B cell (primary cell): ENCODE measurements at regions of chr3 and their contacts with region 1.

Region 1: GRCh38 chr3:56997675-56998074 is 62.8 kb upstream of the SPATA12 start:
- DNase-seq: no peak
- ATAC-seq: no peak
- H3K4me3 ChIP-seq: no peak overlapping the region
- H3K4me3 Mint-ChIP-seq: no peak overlapping the region
- H3K27ac ChIP-seq: no peak overlapping the region
- H3K27ac Mint-ChIP-seq: no peak overlapping the region
- H3K4me1 ChIP-seq: no peaks in the 10 kb centered on the region
- H3K4me1 Mint-ChIP-seq: peaks cover 3% of the 10 kb centered on the region
- H3K27me3 ChIP-seq: peaks cover 0 to 5% (median 0%) of the 10 kb centered on the region in 4 experiments
- H3K27me3 Mint-ChIP-seq: peaks cover 7% of the 10 kb centered on the region
- CTCF ChIP-seq: no peak

Region 2: DNA sequence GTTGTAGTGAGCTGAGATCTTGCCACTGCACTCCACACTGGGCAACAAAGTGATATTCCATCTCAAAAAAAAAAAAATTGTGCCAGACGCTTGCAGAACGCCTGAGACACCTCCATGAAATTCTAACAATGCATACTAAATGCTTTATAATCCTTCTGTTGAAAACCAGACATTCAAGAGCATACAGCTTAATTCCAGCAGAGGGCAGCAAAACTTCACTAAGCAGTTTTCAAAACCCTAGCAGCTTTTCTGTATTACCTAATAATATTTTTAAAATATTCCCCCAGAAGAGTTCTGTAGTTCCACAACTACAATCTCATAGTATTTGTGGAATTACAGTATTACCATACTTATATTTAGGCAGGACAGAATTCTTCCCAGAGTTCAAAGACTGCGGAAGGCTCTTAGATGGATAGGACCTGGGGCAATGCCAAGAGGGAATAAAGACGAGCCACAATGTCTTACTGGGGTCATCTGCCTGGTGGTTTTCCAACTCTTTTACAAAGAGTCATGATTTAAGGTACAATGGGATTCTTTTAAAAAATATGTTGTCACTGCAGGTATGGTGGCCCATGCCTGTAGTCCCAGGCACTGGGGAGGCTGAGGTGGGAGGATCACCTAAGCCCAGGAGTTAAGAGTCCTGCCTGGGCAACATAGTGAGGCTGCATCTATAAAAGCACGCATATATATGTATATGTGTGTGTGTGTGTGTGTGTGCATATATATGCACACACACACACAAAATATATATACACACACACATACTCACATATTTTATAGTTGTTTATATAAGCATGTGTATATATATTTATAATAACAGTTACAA is 295.0 kb before region 1 on chr3:
- CTCF ChIA-PET with region 1: interaction called, 310 read pairs
- POLR2A ChIA-PET with region 1: interaction called, 3 read pairs
- intact Hi-C with region 1: no loop called
- DNase-seq: peak; percentile 81
- ATAC-seq: peak; percentile 64
- H3K4me3 ChIP-seq: no peak overlapping the region
- H3K4me3 Mint-ChIP-seq: no peak overlapping the region
- H3K27ac ChIP-seq: no peak overlapping the region
- H3K27ac Mint-ChIP-seq: no peak overlapping the region
- H3K4me1 ChIP-seq: peaks cover 0 to 4% of the 10 kb centered on the region in 2 donors
- H3K4me1 Mint-ChIP-seq: peaks cover 3% of the 10 kb centered on the region
- H3K27me3 ChIP-seq: no peaks in the 10 kb centered on the region
- H3K27me3 Mint-ChIP-seq: no peaks in the 10 kb centered on the region
- CTCF ChIP-seq: peak; percentile 93

Region 3: GRCh38 chr3:57017459-57017845 is 19.8 kb after region 1 on chr3:
- CTCF ChIA-PET with region 1: interaction called, 18 read pairs
- POLR2A ChIA-PET with region 1: no interaction called
- intact Hi-C with region 1: no loop called
- DNase-seq: no peak
- ATAC-seq: no peak
- H3K4me3 ChIP-seq: no peak overlapping the region
- H3K4me3 Mint-ChIP-seq: no peak overlapping the region
- H3K27ac ChIP-seq: no peak overlapping the region
- H3K27ac Mint-ChIP-seq: no peak overlapping the region
- H3K4me1 ChIP-seq: peaks cover 10 to 27% of the 10 kb centered on the region in 2 donors
- H3K4me1 Mint-ChIP-seq: peaks cover 22% of the 10 kb centered on the region
- H3K27me3 ChIP-seq: no peaks in the 10 kb centered on the region
- H3K27me3 Mint-ChIP-seq: peaks cover 6% of the 10 kb centered on the region
- CTCF ChIP-seq: no peak

Region 4: DNA sequence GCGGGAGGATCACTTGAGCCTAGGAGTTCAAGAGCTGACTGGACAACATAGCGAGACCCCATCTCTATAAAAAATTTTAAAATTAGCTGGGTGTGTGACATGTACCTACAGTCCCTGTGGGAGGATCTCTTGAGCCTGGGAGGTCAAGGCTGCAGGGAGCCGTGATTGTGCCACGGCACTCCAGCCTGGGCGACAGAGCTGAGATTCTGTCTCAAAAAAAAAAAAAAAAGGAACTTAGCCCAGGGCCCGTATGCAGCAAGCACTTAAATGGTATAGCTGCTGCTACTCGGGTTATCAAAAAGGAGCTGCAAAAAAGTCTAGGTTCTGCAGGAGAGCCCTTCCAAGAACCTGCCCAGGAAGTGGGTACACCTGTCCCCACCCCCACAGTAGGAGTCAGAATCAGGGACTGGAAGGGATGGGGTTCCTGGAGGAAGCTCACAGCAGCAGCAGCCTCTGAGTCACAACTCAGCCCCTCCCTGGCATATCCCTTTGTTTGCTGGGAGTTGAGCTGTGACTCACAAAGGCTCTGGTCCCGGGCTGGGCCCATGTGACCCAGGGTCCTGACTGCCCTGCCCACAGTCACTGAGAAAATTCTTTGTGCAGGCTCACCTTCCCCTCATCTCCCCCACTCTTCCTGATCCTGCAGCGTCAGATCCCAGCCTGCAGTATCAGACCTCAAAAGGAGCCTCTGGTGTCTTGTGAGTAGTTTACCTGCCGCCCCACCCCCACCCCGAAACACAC is 62.6 kb after region 1 on chr3 and contains the start of gene SPATA12:
- CTCF ChIA-PET with region 1: no interaction called
- POLR2A ChIA-PET with region 1: no interaction called
- intact Hi-C with region 1: no loop called
- DNase-seq: no peak
- ATAC-seq: peak; percentile 31
- H3K4me3 ChIP-seq: no peak within 1 kb of the TSS
- H3K4me3 Mint-ChIP-seq: no peak within 1 kb of the TSS
- H3K27ac ChIP-seq: no peak within 1 kb of the TSS
- H3K27ac Mint-ChIP-seq: no peak within 1 kb of the TSS
- H3K4me1 ChIP-seq: peaks cover 3 to 5% of the 10 kb centered on the region in 2 donors
- H3K4me1 Mint-ChIP-seq: peaks cover 2% of the 10 kb centered on the region
- H3K27me3 ChIP-seq: peaks cover 0 to 38% (median 22%) of the 10 kb centered on the region in 4 experiments
- H3K27me3 Mint-ChIP-seq: peaks cover 50% of the 10 kb centered on the region
- CTCF ChIP-seq: no peak
- total RNA-seq, gene SPATA12: not detected in 2 replicates

Region 5: GRCh38 chr3:57078344-57078634 is 80.6 kb after region 1 on chr3:
- CTCF ChIA-PET with region 1: interaction called, 13 read pairs
- POLR2A ChIA-PET with region 1: no interaction called
- intact Hi-C with region 1: loop called (anchors 2 kb)
- DNase-seq: peak; percentile 80
- ATAC-seq: peak; percentile 83
- H3K4me3 ChIP-seq: peak overlapping the region in 4 of 5 experiments; percentile 54 to 70 (median 62)
- H3K4me3 Mint-ChIP-seq: peak overlapping the region; percentile 86
- H3K27ac ChIP-seq: no peak overlapping the region
- H3K27ac Mint-ChIP-seq: peak overlapping the region; percentile 71
- H3K4me1 ChIP-seq: peaks cover 21 to 22% of the 10 kb centered on the region in 2 donors
- H3K4me1 Mint-ChIP-seq: peaks cover 20% of the 10 kb centered on the region
- H3K27me3 ChIP-seq: peaks cover 0 to 72% (median 54%) of the 10 kb centered on the region in 4 experiments
- H3K27me3 Mint-ChIP-seq: peaks cover 66% of the 10 kb centered on the region
- CTCF ChIP-seq: no peak

Region 6: DNA sequence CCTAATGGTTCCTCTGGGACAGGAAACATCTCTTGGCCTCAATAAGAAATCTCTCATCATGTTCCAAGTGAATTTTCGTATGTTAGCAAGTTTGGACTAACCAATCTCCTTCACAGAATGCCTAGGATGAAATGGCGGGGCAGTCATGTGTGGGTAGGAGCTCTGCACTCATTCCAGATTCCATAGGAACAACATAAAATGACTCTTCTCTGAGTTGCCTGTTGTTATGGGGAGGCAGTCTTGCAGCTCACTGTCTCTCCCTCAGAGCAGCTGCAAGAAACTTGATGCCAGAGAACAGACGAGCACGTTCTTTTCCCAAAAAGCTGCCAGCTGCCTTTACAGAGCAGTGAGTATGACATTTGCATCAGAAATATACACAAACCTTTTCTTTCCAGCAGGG is 96.9 kb after region 1 on chr3:
- CTCF ChIA-PET with region 1: interaction called, 12 read pairs
- POLR2A ChIA-PET with region 1: no interaction called
- intact Hi-C with region 1: no loop called
- DNase-seq: no peak
- ATAC-seq: no peak
- H3K4me3 ChIP-seq: no peak overlapping the region
- H3K4me3 Mint-ChIP-seq: no peak overlapping the region
- H3K27ac ChIP-seq: no peak overlapping the region
- H3K27ac Mint-ChIP-seq: no peak overlapping the region
- H3K4me1 ChIP-seq: peaks cover 0 to 3% of the 10 kb centered on the region in 2 donors
- H3K4me1 Mint-ChIP-seq: peaks cover 2% of the 10 kb centered on the region
- H3K27me3 ChIP-seq: peaks cover 0 to 9% (median 1%) of the 10 kb centered on the region in 4 experiments
- H3K27me3 Mint-ChIP-seq: peaks cover 13% of the 10 kb centered on the region
- CTCF ChIP-seq: no peak

Region 7: GRCh38 chr3:57100046-57100695 is 102.5 kb after region 1 on chr3:
- CTCF ChIA-PET with region 1: interaction called, 10 read pairs
- POLR2A ChIA-PET with region 1: no interaction called
- intact Hi-C with region 1: no loop called
- DNase-seq: peak; percentile 72
- ATAC-seq: peak; percentile 81
- H3K4me3 ChIP-seq: no peak overlapping the region
- H3K4me3 Mint-ChIP-seq: no peak overlapping the region
- H3K27ac ChIP-seq: no peak overlapping the region
- H3K27ac Mint-ChIP-seq: no peak overlapping the region
- H3K4me1 ChIP-seq: peaks cover 0 to 2% of the 10 kb centered on the region in 2 donors
- H3K4me1 Mint-ChIP-seq: no peaks in the 10 kb centered on the region
- H3K27me3 ChIP-seq: peaks cover 0 to 4% (median 0%) of the 10 kb centered on the region in 4 experiments
- H3K27me3 Mint-ChIP-seq: peaks cover 10% of the 10 kb centered on the region
- CTCF ChIP-seq: peak; percentile 97